PC-3 (cell line): ENCODE measurements at regions of chr1 and their contacts with region 1.

Region 1: DNA sequence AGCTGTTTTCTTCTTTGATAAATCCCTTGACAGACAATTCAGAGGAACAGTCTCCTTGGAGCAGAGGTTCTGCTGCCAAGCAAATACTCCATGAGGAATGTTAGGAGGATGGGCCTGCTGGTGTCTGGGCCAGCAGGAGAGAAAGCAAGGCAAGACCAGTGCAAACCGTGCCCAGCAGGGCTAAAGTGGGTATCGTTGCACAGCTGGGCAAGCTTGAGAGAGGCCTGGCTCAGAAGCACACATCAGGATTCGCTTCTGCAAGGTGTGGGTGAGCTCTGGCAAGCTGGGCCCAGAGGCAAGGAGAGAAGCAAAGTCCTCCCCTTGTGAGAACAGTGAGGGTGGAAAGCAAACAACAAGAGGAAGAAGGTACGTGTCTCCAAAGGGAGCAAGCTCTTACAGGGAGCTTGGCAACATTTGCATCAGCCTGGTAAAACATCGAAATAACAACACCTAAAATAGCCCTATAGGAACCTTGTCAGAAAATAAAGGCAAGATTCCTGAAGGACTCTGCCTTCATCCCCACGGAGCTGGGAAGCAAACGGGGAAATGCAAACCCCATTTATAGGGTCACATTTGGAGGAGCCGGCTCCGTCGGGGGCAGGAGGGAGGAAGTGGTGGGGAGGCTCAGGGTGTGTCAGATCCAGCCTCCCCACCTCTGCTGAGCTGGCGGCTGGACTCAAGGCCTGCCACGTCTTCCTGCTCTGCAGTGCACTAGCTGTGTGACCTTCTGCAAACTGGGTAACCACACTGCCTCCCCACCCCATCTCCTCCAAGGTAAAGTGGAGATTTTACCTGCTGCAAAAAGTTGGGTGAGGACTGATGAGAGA is 62.3 kb upstream of the HIVEP3 start:
- DNase-seq: peak; percentile 58
- ATAC-seq: peak; percentile 87
- H3K4me3 ChIP-seq: peak overlapping the region; percentile 15; the same call in 1 of the 2 replicates
- H3K27ac ChIP-seq: peak overlapping the region; percentile 71
- H3K4me1 ChIP-seq: peaks cover 38% of the 10 kb centered on the region
- H3K27me3 ChIP-seq: no peaks in the 10 kb centered on the region
- CTCF ChIP-seq: no peak

Region 2: DNA sequence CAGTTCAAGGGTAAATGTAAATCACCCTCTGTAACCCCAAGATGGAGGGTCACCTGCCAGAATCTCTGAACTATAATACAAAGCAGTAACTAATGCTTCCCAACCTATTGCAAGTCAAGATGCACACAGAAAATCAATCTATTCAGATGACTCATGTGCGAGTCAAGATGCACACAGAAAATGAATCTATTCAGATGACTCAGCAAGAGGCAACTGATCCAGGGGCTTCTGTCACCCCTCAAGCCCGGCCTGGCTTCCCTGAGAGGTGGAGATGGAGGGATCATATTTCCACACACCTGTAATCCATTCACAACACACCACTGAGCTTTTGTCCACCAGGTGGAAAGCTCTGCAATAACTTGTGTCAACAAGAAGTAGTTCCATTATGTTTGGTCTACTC is 44.9 kb before region 1 on chr1:
- CTCF ChIA-PET with region 1: no interaction called
- POLR2A ChIA-PET with region 1: interaction called, 5 read pairs
- intact Hi-C with region 1: loop called (anchors 5 kb)
- DNase-seq: peak; percentile 92
- ATAC-seq: peak; percentile 93
- H3K4me3 ChIP-seq: no peak overlapping the region
- H3K27ac ChIP-seq: peak overlapping the region; percentile 62
- H3K4me1 ChIP-seq: peaks cover 17% of the 10 kb centered on the region
- H3K27me3 ChIP-seq: no peaks in the 10 kb centered on the region
- CTCF ChIP-seq: peak; percentile 48

Region 3: GRCh38 chr1:41955461-41956159 is 25.4 kb before region 1 on chr1:
- CTCF ChIA-PET with region 1: no interaction called
- POLR2A ChIA-PET with region 1: interaction called, 3 read pairs
- intact Hi-C with region 1: loop called (anchors 2 kb)
- DNase-seq: peak; percentile 96
- ATAC-seq: peak; percentile 82
- H3K4me3 ChIP-seq: peak overlapping the region; percentile 51; the same call in 1 of the 2 replicates
- H3K27ac ChIP-seq: peak overlapping the region; percentile 99
- H3K4me1 ChIP-seq: peaks cover 62% of the 10 kb centered on the region
- H3K27me3 ChIP-seq: no peaks in the 10 kb centered on the region
- CTCF ChIP-seq: no peak